Gastrocnemius medialis (tissue), 4 donors: ENCODE measurements at regions of chr1 and their contacts with region 1.

Region 1: DNA sequence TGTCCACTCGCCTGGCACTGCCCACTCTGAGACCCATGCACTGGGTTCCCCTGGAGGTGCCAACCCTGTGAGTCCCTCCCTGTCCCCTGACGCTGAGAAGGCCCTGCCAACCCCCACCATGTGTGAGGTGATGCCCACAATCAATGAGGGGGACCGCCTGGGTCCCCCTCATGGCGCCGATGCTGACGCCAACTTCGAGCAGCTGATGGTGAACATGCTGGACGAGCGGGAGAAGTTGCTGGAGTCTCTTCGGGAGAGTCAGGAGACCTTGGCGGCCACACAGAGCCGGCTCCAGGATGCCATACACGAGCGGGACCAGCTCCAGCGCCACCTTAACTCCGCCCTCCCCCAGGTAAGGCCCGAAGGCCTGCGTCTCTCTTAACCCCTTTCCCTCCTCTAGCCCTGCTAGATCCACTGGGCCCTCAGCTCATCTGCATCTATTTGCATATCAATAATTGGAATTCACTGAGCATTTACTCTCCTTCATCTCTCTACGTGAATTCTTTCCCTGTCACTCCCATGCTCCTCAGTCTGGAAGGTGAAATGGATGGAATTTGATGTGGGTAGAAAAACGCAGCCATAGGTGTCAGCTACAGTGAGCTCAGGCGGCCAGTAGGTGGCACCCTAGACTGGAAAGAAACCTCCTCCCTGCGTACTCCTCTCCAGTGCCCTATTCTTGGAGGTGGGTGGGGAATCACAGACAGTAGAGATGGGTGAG is 12.8 kb downstream of the PPFIA4 start:
- DNase-seq: peak; percentile 69 to 82
- ATAC-seq: peak; percentile 48 to 53
- H3K4me3 ChIP-seq: peak overlapping the region in 1 of 4 donors; percentile 24
- H3K27ac ChIP-seq: peak overlapping the region; percentile 95 to 98 (median 96)
- H3K4me1 ChIP-seq: peaks cover 51 to 64% of the 10 kb centered on the region in 2 donors
- H3K27me3 ChIP-seq: no peaks in the 10 kb centered on the region
- CTCF ChIP-seq: peak; percentile 92 to 95 (median 94)
- POLR2A ChIP-seq: no peak

Region 2: DNA sequence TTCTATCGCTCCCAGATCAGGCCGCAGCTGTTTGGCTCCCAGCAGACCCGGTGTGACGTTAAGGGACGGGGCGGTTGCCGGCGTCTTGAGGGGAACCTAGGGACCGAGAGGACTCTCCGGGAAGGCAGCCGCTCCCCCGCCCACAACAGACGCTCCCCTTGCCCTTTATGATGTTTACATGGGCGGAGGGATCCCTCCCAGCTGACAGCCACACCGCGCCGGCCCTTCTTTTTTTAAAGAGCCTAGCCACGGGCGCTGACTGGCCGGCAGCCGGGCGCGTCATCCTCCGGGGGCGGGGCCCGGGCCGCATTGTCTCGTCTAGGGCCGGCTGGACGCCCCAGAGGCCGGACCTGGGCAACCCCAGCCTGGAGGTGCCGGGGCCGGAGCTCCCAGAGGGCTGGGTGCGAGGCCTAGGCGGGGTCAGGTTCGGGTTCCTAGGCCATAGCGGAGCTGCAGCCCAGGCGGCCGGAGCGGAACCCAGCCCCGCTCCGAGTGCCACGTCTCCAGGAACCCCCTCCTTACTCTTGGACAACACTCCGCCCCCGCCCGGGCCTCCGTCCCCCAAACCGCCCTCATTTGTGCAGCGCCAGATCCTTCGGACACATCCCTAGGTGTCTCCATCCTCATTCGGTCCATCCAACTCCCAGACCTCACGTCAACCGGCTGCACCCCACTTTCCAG is 228.3 kb before region 1 on chr1 and contains the start of gene PCAT6:
- in situ Hi-C with region 1: no loop called
- intact Hi-C with region 1: no loop called
- DNase-seq: peak; percentile 92 to 95
- ATAC-seq: peak; percentile 79 to 85
- H3K4me3 ChIP-seq: peak within 1 kb of the TSS; percentile 69 to 94 (median 78)
- H3K27ac ChIP-seq: peak within 1 kb of the TSS; percentile 83 to 88 (median 86)
- H3K4me1 ChIP-seq: peaks cover 15 to 17% of the 10 kb centered on the region in 2 donors
- H3K27me3 ChIP-seq: no peaks in the 10 kb centered on the region
- CTCF ChIP-seq: peak in 1 of 5 experiments; percentile 17
- POLR2A ChIP-seq: peak; percentile 73 to 94
- total RNA-seq, gene PCAT6: 4.3 TPM in 1 of 4 donors, not detected in the others

Region 3: GRCh38 chr1:203127666-203128430 is 88.8 kb after region 1 on chr1 and contains the start of gene ADORA1:
- in situ Hi-C with region 1: no loop called
- intact Hi-C with region 1: loop called (anchors 2 kb)
- DNase-seq: peak; percentile 47 to 69
- ATAC-seq: peak; percentile 90 to 92
- H3K4me3 ChIP-seq: peak within 1 kb of the TSS; percentile 50 to 78 (median 60)
- H3K27ac ChIP-seq: peak within 1 kb of the TSS; percentile 58 to 65 (median 62)
- H3K4me1 ChIP-seq: peaks cover 28 to 41% of the 10 kb centered on the region in 2 donors
- H3K27me3 ChIP-seq: no peaks in the 10 kb centered on the region
- CTCF ChIP-seq: peak in 2 of 5 experiments; percentile 8 to 11
- POLR2A ChIP-seq: no peak
- total RNA-seq, gene ADORA1: 0.25 to 5.6 (median 1.7) TPM

Region 4: DNA sequence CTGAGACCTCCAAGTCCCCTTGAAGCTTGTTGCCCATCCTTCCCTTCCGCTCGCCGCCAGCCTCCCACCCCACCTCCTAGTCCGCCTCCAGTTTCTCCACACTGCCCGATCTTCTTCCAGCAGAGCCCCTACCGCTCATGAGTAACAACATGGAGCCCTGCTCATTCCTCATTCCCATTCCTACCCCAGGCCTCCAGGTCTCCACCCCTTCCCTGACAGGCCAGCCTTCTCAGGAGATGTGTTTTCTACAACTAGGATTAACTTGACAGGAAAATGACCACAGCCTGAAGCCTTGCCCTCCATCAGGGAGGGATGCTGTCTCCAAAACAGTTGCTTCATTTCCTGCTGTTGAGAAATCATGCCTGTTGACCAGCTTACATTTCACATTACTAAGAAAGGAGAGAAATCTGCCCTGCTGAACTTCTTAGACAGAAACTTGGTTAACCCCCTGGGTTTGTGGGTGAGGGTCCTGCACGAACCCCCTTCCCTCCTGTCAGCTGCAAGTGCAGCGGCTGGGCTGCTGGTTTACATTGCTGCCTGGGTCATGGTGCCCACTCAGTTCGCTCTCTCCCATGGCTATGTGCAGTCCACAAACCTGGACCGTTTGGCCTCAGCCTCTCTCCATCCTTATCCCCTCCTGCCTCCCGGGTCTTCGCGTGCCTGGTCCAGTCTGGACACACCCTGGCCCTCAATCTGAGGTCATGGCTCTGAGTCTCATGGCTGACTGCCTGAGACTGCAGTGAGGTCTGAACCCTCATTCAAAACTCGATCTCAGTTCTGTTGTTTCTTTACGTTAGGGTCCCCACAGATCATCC is 163.6 kb after region 1 on chr1:
- in situ Hi-C with region 1: loop called in 1 of 4 experiments (anchors 10 kb)
- intact Hi-C with region 1: no loop called
- DNase-seq: peak; percentile 59 to 70
- ATAC-seq: peak; percentile 63 to 76
- H3K4me3 ChIP-seq: no peak overlapping the region
- H3K27ac ChIP-seq: peak overlapping the region; percentile 74 to 85 (median 83)
- H3K4me1 ChIP-seq: peaks cover 33 to 48% of the 10 kb centered on the region in 2 donors
- H3K27me3 ChIP-seq: no peaks in the 10 kb centered on the region
- CTCF ChIP-seq: no peak
- POLR2A ChIP-seq: peak in 1 of 2 donors; percentile 10

Region 5: DNA sequence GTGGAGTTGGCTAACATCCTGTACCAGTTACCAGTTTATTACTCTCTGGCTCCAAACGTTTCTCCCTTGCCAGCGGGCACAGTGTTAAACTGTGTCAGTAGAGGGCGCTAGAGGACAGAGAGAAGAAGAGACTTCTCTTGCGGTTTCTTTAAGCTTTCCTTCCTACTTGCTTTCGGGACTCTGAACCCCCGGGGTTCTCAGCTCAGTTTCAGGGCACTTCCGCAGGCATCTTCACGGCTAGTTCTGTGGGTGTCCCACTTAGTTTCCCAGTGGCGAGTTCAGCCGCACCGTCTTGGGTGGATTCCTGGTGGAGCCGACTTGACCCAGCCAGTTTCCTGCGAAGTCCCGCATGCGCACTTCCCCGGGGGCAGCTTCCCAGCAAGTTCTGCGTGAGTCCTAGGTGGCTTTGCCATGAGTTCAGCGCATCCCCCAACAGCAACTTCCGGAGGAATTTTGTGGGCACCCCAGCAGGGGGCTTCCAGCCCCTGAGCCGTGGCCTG is 228.3 kb after region 1 on chr1:
- in situ Hi-C with region 1: no loop called
- intact Hi-C with region 1: loop called (anchors 2 kb)
- DNase-seq: peak; percentile 66 to 86
- ATAC-seq: peak; percentile 73 to 78
- H3K4me3 ChIP-seq: peak overlapping the region; percentile 62 to 70 (median 66)
- H3K27ac ChIP-seq: peak overlapping the region; percentile 86 to 93 (median 88)
- H3K4me1 ChIP-seq: peaks cover 34 to 35% of the 10 kb centered on the region in 2 donors
- H3K27me3 ChIP-seq: no peaks in the 10 kb centered on the region
- CTCF ChIP-seq: peak; percentile 93 to 97 (median 94)
- POLR2A ChIP-seq: peak in 1 of 2 donors; percentile 11

Region 6: GRCh38 chr1:203795441-203796235 is 756.6 kb after region 1 on chr1 and contains the starts of genes ZBED6 and ZC3H11A:
- in situ Hi-C with region 1: no loop called
- intact Hi-C with region 1: loop called (anchors 10 kb)
- DNase-seq: peak; percentile 99
- ATAC-seq: peak; percentile 93 to 95
- H3K4me3 ChIP-seq: peak within 1 kb of the TSS; percentile 75 to 91 (median 86)
- H3K27ac ChIP-seq: peak within 1 kb of the TSS; percentile 98 to 99 (median 98)
- H3K4me1 ChIP-seq: peaks cover 41 to 47% of the 10 kb centered on the region in 2 donors
- H3K27me3 ChIP-seq: no peaks in the 10 kb centered on the region
- CTCF ChIP-seq: peak in 1 of 5 experiments; percentile 27
- POLR2A ChIP-seq: peak; percentile 82 to 94
- total RNA-seq, gene ZBED6: 9.0 to 42.5 (median 27.6) TPM
- total RNA-seq, gene ZC3H11A: 71.0 to 131 (median 92.0) TPM